Activated CD4-positive, alpha-beta T cell treated with anti-CD3 and anti-CD28 coated beads for 36 hours (primary cell): ENCODE measurements at regions of chr20 and their contacts with region 1.

Region 1: GRCh38 chr20:25237610-25238318 is 10.1 kb upstream of the PYGB start:
- DNase-seq: peak; percentile 82
- ATAC-seq: peak; percentile 97
- H3K4me3 Mint-ChIP-seq: peak overlapping the region; percentile 56
- H3K27ac Mint-ChIP-seq: peak overlapping the region; percentile 96
- H3K4me1 Mint-ChIP-seq: peaks cover 30% of the 10 kb centered on the region
- H3K27me3 Mint-ChIP-seq: peaks cover 12% of the 10 kb centered on the region

Region 2: GRCh38 chr20:23477223-23477622 is 1760.5 kb before region 1 on chr20:
- CTCF ChIA-PET with region 1: no interaction called
- POLR2A ChIA-PET with region 1: no interaction called
- intact Hi-C with region 1: no loop called
- DNase-seq: no peak
- ATAC-seq: no peak
- H3K4me3 Mint-ChIP-seq: no peak overlapping the region
- H3K27ac Mint-ChIP-seq: no peak overlapping the region
- H3K4me1 Mint-ChIP-seq: no peaks in the 10 kb centered on the region
- H3K27me3 Mint-ChIP-seq: peaks cover 7% of the 10 kb centered on the region

Region 3: GRCh38 chr20:25160467-25160866 is 77.3 kb before region 1 on chr20:
- CTCF ChIA-PET with region 1: no interaction called
- POLR2A ChIA-PET with region 1: no interaction called
- intact Hi-C with region 1: loop called in 1 of 2 experiments (anchors 2 kb)
- DNase-seq: no peak
- ATAC-seq: peak; percentile 93
- H3K4me3 Mint-ChIP-seq: no peak overlapping the region
- H3K27ac Mint-ChIP-seq: peak overlapping the region; percentile 69
- H3K4me1 Mint-ChIP-seq: peaks cover 13% of the 10 kb centered on the region
- H3K27me3 Mint-ChIP-seq: no peaks in the 10 kb centered on the region